ENCODE measurements at regions of chr7 and their contacts with region 1.

Region 1: DNA sequence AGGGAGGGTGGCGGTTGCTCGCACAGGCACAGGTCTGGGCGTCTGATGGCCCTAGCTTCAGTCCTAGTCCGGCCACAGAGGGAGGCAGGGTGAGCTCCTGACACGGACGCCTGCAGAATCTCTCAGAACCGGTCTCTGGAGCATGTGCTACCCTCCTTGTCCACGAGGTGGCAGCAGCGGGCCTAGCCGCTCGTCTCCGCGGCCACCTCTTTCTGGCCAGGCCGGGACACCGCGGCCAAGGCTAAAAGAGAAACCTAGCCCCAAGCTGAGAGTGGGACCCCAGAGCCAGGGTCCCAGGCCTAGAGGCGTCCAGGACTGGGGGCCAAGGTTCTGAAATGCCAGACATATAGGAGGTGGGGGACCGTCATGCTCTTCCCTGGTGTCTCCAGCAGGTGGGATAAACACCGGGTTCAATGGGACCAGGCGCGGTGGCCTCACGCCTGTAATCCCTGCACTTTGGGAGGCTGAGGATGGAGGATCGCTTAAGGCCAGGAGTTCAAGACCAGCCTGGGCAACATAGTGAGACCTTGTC is 3.2 kb upstream of the LAT2 start:
- DNase-seq: peak; percentile 95
- H3K4me3 Mint-ChIP-seq: peak overlapping the region; percentile 51
- H3K27ac Mint-ChIP-seq: no peak overlapping the region
- H3K4me1 Mint-ChIP-seq: peaks cover 21% of the 10 kb centered on the region
- H3K27me3 Mint-ChIP-seq: no peaks in the 10 kb centered on the region

Region 2: GRCh38 chr7:74068393-74069085 is 138.1 kb before region 1 on chr7:
- intact Hi-C with region 1: loop called (anchors 5 kb)
- DNase-seq: no peak
- H3K4me3 Mint-ChIP-seq: no peak overlapping the region
- H3K27ac Mint-ChIP-seq: peak overlapping the region; percentile 5
- H3K4me1 Mint-ChIP-seq: peaks cover 7% of the 10 kb centered on the region
- H3K27me3 Mint-ChIP-seq: no peaks in the 10 kb centered on the region

Region 3: DNA sequence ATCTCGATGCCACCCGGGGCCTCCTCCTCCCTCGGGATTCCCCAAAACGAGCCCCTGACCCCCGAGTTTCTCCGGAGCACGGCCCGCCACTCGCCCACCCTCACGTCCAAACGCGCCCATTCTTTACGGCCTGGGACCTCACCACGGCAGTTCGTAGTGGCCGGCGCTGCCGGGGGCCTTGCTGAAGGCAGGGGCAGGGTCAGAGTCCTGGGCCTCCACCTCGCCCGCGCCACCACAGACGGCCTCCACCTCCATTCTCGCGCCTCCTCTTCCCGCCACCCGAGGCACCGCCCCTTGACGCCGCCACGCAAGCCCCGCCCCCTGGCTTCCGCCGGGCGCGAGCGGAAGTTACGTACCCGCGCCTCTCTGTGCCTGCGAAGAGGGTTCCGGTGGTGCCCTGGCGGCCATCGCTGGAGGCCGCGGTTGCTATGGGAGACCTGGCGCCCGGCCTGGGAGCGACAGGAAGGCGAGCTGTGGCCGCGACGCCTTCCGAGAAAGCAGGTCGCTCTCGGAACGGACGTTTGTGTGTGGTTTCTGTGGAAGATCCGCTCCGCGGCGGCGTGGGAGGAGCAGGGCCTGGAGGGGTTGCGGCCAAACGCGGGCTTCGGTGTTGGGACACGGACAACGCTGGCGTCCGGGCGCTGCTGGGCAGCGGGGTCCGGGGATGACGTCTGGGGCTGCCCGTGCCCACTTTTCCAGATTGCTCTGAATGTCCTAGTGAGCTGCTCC is 47.6 kb after region 1 on chr7 and contains the start of gene RFC2:
- intact Hi-C with region 1: loop called (anchors 5 kb)
- DNase-seq: peak; percentile 100
- H3K4me3 Mint-ChIP-seq: peak within 1 kb of the TSS; percentile 98
- H3K27ac Mint-ChIP-seq: peak within 1 kb of the TSS; percentile 96
- H3K4me1 Mint-ChIP-seq: peaks cover 23% of the 10 kb centered on the region
- H3K27me3 Mint-ChIP-seq: no peaks in the 10 kb centered on the region
- total RNA-seq, gene RFC2: 88.0 and 94.7 TPM in 2 replicates